ENCODE measurements at regions of chr17 and their contacts with region 1.

Region 1: GRCh38 chr17:75109407-75110233 is at the start of gene ARMC7:
- DNase-seq: peak; percentile 94 to 96
- ATAC-seq: peak; percentile 90
- H3K4me3 ChIP-seq: peak within 1 kb of the TSS; percentile 57 to 90
- H3K27ac ChIP-seq: no peak within 1 kb of the TSS
- H3K4me1 ChIP-seq: no peaks in the 10 kb centered on the region
- H3K27me3 ChIP-seq: no peaks in the 10 kb centered on the region
- total RNA-seq, gene ARMC7: 8.7 to 19.4 TPM

Region 2: GRCh38 chr17:74961657-74962490 is 147.7 kb before region 1 on chr17:
- intact Hi-C with region 1: loop called in 1 of 2 experiments (anchors 5 kb)
- DNase-seq: peak; percentile 93 to 95
- ATAC-seq: peak; percentile 83
- H3K4me3 ChIP-seq: no peak overlapping the region
- H3K27ac ChIP-seq: no peak overlapping the region
- H3K4me1 ChIP-seq: no peaks in the 10 kb centered on the region
- H3K27me3 ChIP-seq: no peaks in the 10 kb centered on the region

Region 3: DNA sequence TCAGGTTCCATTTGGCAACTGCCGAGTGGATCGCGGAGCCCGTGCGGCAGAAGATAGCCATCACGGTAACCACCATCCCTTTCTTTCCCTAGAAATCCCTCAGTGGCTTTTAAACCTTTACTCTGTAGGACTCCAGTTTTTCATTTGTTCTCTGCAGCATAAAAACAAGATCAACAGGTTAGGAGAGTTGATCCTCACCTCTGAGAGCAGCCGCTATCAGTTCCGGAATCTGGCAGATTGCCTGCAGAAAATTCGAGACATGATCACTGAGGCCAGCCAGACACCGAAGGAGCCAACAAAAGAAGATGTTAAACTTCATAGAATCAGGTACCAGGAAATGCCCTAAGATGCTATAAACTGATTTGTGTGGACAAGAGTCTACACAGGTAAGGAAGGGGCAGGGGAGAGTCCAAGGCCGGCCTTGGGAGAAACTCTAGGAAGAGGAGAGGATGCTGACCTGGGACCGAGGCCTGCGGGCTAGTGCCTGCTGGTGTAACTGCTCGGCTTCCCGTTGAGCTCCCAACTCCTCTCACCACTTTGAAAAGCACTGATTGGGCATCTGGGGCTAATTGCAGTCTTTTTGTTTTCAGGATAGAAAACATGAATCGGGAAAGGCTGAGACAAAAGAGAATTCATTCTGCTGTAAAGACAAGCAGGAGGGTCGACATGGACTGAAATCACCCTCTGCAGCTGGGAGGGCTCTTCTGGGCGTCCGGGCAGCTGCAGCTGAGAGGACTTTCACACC is 89.1 kb before region 1 on chr17:
- intact Hi-C with region 1: no loop called
- DNase-seq: no peak
- ATAC-seq: no peak
- H3K4me3 ChIP-seq: no peak overlapping the region
- H3K27ac ChIP-seq: no peak overlapping the region
- H3K4me1 ChIP-seq: no peaks in the 10 kb centered on the region
- H3K27me3 ChIP-seq: no peaks in the 10 kb centered on the region

Region 4: DNA sequence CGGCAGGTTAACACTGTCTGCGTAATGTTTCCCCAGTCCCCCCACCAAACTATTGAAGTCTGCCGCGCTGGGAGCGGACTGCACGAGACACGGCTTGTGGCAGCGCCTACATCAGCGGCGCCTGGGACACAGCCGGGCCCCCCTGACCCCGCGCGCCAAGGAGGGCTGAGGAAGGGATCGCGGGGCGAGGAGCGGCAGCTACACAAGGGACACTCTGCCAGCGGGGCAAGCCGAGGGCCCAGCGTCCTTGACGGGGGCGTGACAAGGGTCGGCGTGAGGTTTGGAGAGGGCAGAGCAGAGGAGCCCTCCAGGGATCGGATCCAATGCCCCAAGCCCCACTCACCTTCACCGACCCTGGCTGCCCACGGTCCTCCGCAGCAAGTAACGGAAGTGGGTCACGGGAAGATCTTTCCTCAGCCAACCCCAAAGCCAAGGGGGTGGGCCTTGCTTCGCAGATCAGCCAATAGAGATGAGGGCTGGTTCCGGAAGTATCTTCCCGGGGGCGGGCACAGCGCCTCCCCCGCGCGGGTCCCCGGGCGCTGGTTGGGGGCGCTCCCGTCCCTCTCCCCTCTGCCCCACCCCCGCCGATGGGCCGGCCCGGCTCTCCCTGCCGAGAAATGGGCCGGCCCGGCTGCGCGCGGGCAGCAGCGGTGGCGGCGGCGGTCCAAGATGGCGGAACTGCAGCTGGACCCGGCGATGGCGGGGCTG is 62.9 kb before region 1 on chr17 and contains the starts of genes ATP5PD and KCTD2:
- intact Hi-C with region 1: loop called in 1 of 2 experiments (anchors 5 kb)
- DNase-seq: peak; percentile 98
- ATAC-seq: peak; percentile 100
- H3K4me3 ChIP-seq: peak within 1 kb of the TSS; percentile 96 to 99
- H3K27ac ChIP-seq: peak within 1 kb of the TSS; percentile 47 to 99
- H3K4me1 ChIP-seq: peaks cover 0 to 2% of the 10 kb centered on the region in 2 donors
- H3K27me3 ChIP-seq: no peaks in the 10 kb centered on the region
- total RNA-seq, gene ATP5PD: 136 to 149 TPM
- total RNA-seq, gene KCTD2: 21.4 to 26.4 TPM

Region 5: DNA sequence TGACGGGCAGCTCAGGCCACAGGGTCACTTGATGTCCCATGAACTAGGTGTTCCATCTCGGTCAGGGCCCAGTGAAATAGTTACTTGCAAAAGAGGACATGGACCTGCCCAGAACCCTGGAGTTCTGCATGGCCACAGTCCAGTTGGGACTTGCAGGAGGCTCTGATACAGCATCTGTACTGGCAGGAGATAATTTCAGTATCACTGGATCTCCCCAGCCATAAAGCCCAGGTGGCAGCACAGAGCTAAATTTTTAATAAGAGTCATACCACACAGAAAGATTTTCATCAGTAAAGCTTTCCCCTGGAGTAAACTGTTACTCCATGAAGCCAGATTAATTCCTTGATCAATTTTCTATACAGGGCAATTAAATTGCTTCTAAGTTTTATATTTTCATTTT is 39.8 kb before region 1 on chr17:
- intact Hi-C with region 1: no loop called
- DNase-seq: peak in 1 of 2 donors; percentile 55
- ATAC-seq: no peak
- H3K4me3 ChIP-seq: no peak overlapping the region
- H3K27ac ChIP-seq: no peak overlapping the region
- H3K4me1 ChIP-seq: no peaks in the 10 kb centered on the region
- H3K27me3 ChIP-seq: no peaks in the 10 kb centered on the region

Region 6: GRCh38 chr17:75173526-75173925 is 63.9 kb after region 1 on chr17:
- intact Hi-C with region 1: loop called in 1 of 2 experiments (anchors 10 kb)
- DNase-seq: peak in 1 of 2 donors; percentile 6
- ATAC-seq: no peak
- H3K4me3 ChIP-seq: no peak overlapping the region
- H3K27ac ChIP-seq: no peak overlapping the region
- H3K4me1 ChIP-seq: peaks cover 0 to 2% of the 10 kb centered on the region in 2 donors
- H3K27me3 ChIP-seq: no peaks in the 10 kb centered on the region

Region 7: GRCh38 chr17:75182569-75183450 is 73.2 kb after region 1 on chr17 and contains the start of gene SUMO2:
- intact Hi-C with region 1: loop called (anchors 5 to 10 kb)
- DNase-seq: peak; percentile 96 to 98
- ATAC-seq: peak; percentile 98
- H3K4me3 ChIP-seq: peak within 1 kb of the TSS; percentile 85 to 99
- H3K27ac ChIP-seq: peak within 1 kb of the TSS; percentile 93 to 98
- H3K4me1 ChIP-seq: no peaks in the 10 kb centered on the region
- H3K27me3 ChIP-seq: no peaks in the 10 kb centered on the region
- total RNA-seq, gene SUMO2: 262 to 280 TPM

Region 8: GRCh38 chr17:75199886-75200618 is 90.4 kb after region 1 on chr17:
- intact Hi-C with region 1: loop called (anchors 2 kb)
- DNase-seq: no peak
- ATAC-seq: no peak
- H3K4me3 ChIP-seq: no peak overlapping the region
- H3K27ac ChIP-seq: no peak overlapping the region
- H3K4me1 ChIP-seq: no peaks in the 10 kb centered on the region
- H3K27me3 ChIP-seq: no peaks in the 10 kb centered on the region

Region 9: DNA sequence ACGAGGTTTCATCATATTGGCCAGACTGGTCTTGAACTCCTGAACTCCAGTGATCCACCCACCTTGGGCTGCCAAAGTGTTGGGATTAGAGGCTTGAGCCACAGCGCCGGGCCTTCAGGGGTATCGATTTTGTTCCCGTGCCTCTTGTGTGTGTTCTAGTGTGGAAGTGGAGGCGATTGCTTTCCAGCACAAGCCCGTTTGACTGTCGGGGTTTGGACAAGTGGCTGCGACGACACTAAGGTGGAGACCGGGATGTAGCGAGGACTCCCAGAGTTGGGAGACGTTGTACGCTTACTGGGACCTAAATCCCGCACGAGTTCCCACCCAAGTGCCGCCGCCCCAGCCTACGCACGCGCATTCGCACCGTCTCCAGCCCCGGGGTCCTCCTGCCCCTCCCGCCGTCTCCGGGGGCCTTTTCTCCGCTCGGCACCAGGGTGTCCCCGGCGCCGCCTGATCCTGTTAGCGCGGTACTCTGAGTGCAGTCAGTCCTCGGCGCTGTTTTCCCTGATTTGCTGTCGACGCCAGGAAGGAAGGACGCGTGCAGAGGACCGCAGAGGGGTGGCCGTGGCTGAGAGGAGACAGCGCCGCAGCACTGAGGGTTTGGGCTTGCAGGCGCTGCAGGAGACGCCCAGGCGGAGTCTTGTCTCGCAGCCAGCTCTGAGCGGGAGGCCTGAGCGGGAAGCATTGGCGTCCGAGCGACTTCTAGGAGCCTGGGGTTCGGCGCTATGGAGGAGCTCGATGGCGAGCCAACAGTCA is 95.6 kb after region 1 on chr17 and contains the start of gene NUP85:
- intact Hi-C with region 1: loop called (anchors 2 kb)
- DNase-seq: peak; percentile 96 to 98
- ATAC-seq: peak; percentile 99
- H3K4me3 ChIP-seq: peak within 1 kb of the TSS; percentile 80 to 90
- H3K27ac ChIP-seq: peak within 1 kb of the TSS in 1 of 2 donors; percentile 79
- H3K4me1 ChIP-seq: no peaks in the 10 kb centered on the region
- H3K27me3 ChIP-seq: no peaks in the 10 kb centered on the region
- total RNA-seq, gene NUP85: 71.0 to 76.2 TPM